GM12878 (cell line): ENCODE measurements at regions of chr1 and their contacts with region 1.

Region 1: GRCh38 chr1:161098210-161099068 is at the start of gene KLHDC9:
- DNase-seq: peak; percentile 87
- ATAC-seq: peak; percentile 91
- H3K4me3 ChIP-seq: peak within 1 kb of the TSS; percentile 74
- H3K27ac ChIP-seq: peak within 1 kb of the TSS; percentile 66
- H3K4me1 ChIP-seq: peaks cover 29% of the 10 kb centered on the region
- H3K27me3 ChIP-seq: no peaks in the 10 kb centered on the region
- CTCF ChIP-seq: peak in 2 of 3 experiments; percentile 20 to 22; a peak in 3 of 6 replicates
- EP300 ChIP-seq: no peak; a peak in 1 of 4 replicates
- POLR2A ChIP-seq: no peak
- RAD21 ChIP-seq: no peak
- polyA plus RNA-seq, gene KLHDC9: 0.66 to 1.3 TPM

Region 2: GRCh38 chr1:160997323-160998038 is 101.0 kb before region 1 on chr1:
- CTCF ChIA-PET with region 1: interaction called, 147 read pairs
- POLR2A ChIA-PET with region 1: interaction called, 13 read pairs
- RAD21 ChIA-PET with region 1: interaction called, 42 read pairs
- SMC1A ChIA-PET with region 1: interaction called, 70 read pairs
- in situ Hi-C with region 1: no loop called
- intact Hi-C with region 1: loop called (anchors 1 kb)
- DNase-seq: no peak
- ATAC-seq: peak; percentile 93
- H3K4me3 ChIP-seq: no peak overlapping the region
- H3K27ac ChIP-seq: peak overlapping the region; percentile 33; the same call in 1 of the 2 replicates
- H3K4me1 ChIP-seq: peaks cover 3% of the 10 kb centered on the region; the same call in 1 of the 2 replicates
- H3K27me3 ChIP-seq: no peaks in the 10 kb centered on the region
- CTCF ChIP-seq: peak; percentile 65 to 80 (median 72)
- EP300 ChIP-seq: no peak
- POLR2A ChIP-seq: no peak
- RAD21 ChIP-seq: peak; percentile 85

Region 3: GRCh38 chr1:161021165-161021960 is 77.1 kb before region 1 on chr1:
- CTCF ChIA-PET with region 1: interaction called, 7 read pairs
- POLR2A ChIA-PET with region 1: interaction called, 3 read pairs
- RAD21 ChIA-PET with region 1: interaction called, 17 read pairs
- SMC1A ChIA-PET with region 1: interaction called, 23 read pairs
- in situ Hi-C with region 1: no loop called
- intact Hi-C with region 1: no loop called
- DNase-seq: peak; percentile 66
- ATAC-seq: peak; percentile 96
- H3K4me3 ChIP-seq: peak overlapping the region; percentile 75
- H3K27ac ChIP-seq: peak overlapping the region; percentile 33
- H3K4me1 ChIP-seq: peaks cover 19% of the 10 kb centered on the region
- H3K27me3 ChIP-seq: no peaks in the 10 kb centered on the region
- CTCF ChIP-seq: no peak
- EP300 ChIP-seq: no peak
- POLR2A ChIP-seq: peak; percentile 69; the same call in 1 of the 2 replicates
- RAD21 ChIP-seq: no peak

Region 4: GRCh38 chr1:161045750-161046571 is 52.5 kb before region 1 on chr1 and contains the start of gene USF1:
- CTCF ChIA-PET with region 1: interaction called, 181 read pairs
- POLR2A ChIA-PET with region 1: interaction called, 32 read pairs
- RAD21 ChIA-PET with region 1: interaction called, 40 read pairs
- SMC1A ChIA-PET with region 1: interaction called, 56 read pairs
- in situ Hi-C with region 1: no loop called
- intact Hi-C with region 1: loop called (anchors 1 kb)
- DNase-seq: peak; percentile 92
- ATAC-seq: peak; percentile 86
- H3K4me3 ChIP-seq: peak within 1 kb of the TSS; percentile 90
- H3K27ac ChIP-seq: peak within 1 kb of the TSS; percentile 100
- H3K4me1 ChIP-seq: peaks cover 15% of the 10 kb centered on the region
- H3K27me3 ChIP-seq: no peaks in the 10 kb centered on the region
- CTCF ChIP-seq: no peak
- EP300 ChIP-seq: no peak
- POLR2A ChIP-seq: peak; percentile 90
- RAD21 ChIP-seq: no peak
- polyA plus RNA-seq, gene USF1: 9.4 to 26.3 TPM

Region 5: DNA sequence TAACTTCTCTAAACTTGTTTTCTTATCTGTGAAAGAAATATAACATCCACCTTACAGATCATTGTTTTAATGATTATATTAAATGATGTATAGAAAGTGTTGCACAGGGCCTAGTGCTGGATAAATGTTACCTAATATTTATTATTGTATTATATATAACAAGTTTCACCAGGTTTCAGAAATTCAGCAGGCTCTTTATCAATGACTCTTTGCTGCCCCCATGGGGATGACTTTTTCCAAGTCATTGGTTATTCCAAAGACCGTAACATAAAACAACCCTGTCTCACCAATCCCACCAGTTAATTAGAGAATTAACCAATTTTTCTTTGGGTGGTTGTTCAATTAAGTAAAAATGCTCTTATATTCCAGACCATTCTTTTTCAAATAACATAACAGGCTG is 41.3 kb after region 1 on chr1:
- CTCF ChIA-PET with region 1: interaction called, 14 read pairs
- POLR2A ChIA-PET with region 1: interaction called, 5 read pairs
- RAD21 ChIA-PET with region 1: interaction called, 5 read pairs
- SMC1A ChIA-PET with region 1: interaction called, 12 read pairs
- in situ Hi-C with region 1: no loop called
- intact Hi-C with region 1: no loop called
- DNase-seq: no peak
- ATAC-seq: peak; percentile 74
- H3K4me3 ChIP-seq: no peak overlapping the region
- H3K27ac ChIP-seq: no peak overlapping the region
- H3K4me1 ChIP-seq: no peaks in the 10 kb centered on the region
- H3K27me3 ChIP-seq: no peaks in the 10 kb centered on the region
- CTCF ChIP-seq: peak; percentile 40 to 61 (median 44)
- EP300 ChIP-seq: no peak
- POLR2A ChIP-seq: no peak
- RAD21 ChIP-seq: peak; percentile 74

Region 6: DNA sequence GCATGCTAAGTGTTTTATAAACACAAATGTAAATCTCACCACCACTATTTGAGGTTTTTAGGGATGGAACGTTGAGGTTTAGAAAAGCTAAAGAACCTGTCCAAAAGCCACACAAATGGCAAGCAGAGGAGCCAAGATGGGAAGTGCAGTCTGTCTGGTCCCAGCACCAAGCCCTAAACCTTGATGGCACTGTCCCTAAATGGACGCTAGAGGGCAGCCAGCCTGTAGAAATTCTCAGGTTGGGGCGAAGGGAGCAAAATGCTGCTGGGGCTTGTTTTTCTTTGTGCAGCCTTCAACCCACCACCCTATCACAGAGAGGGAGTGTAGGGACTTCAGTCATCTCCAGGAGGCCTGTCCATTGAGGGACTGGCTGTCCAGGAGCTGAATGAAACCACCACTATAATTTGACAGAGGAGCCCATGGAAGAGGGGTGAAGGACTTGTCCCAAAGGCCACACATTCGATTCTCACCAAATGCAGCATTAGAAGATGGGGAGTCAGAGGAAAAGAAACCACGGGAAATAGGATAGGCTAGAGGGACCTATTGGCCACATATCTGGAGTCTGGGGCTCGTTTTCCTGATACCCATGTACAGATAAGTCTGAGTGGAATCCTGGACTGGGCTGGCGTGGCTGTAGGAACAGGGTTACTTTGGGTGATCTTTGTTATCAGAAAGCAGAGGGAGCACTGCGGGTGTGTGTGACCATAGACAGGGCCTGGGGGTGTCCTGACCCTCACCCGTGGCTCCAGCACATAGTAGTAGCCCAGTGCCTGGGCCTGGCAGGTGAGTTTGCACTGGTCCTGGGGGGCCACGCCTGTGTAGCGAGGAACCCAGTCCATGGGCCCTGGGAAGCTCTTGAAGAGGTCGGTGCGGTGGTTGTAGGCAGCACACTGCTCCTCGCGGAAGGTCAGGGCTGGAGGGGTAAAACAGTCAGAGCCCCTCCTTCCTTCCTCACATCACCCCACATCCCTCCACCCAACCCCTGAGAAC is 94.3 kb after region 1 on chr1:
- CTCF ChIA-PET with region 1: no interaction called
- POLR2A ChIA-PET with region 1: no interaction called
- RAD21 ChIA-PET with region 1: no interaction called
- SMC1A ChIA-PET with region 1: no interaction called
- in situ Hi-C with region 1: no loop called
- intact Hi-C with region 1: no loop called
- DNase-seq: no peak
- ATAC-seq: peak; percentile 94
- H3K4me3 ChIP-seq: no peak overlapping the region
- H3K27ac ChIP-seq: no peak overlapping the region
- H3K4me1 ChIP-seq: peaks cover 19% of the 10 kb centered on the region
- H3K27me3 ChIP-seq: no peaks in the 10 kb centered on the region
- CTCF ChIP-seq: peak; percentile 89 to 95 (median 89)
- EP300 ChIP-seq: no peak
- POLR2A ChIP-seq: no peak
- RAD21 ChIP-seq: peak; percentile 84